SK-N-SH (cell line): ENCODE measurements at regions of chr11 and their contacts with region 1.

Region 1: DNA sequence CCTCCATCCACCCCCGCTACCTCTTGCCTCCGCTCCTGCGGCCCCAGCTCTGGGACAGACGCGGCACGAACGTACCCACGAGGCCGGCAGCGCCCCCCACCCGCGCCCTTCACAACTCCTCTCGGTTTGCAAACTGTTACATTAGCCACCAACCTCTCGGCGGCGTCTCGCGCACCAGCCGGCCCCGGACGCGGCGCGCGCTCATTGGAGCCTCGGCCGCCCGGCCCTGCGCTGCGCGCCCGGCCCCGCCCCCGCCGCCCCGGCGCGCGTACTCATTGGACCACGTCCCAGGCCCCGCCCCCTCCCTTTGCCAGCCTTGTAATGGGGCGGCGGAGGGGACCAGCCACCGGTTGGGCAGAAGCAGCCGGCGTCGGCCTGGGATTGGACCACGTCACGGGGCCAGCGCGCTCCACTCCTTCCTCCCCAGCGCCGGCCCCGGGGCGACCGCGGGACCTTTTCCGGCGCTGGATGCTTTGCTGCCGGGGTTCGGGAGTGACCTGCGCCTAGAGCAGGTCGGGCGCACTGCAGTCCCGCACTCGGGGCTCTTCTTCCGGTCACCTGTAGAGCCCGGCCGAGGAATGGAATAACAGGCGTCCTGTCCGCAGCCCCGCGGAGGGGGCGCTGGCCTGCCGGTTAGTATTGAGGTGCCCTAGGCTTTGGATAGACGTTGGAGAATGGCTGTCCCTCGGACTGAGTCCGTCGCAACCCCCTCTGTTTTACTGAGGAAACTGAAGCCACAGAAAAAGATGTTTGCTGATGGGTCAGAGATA is at the start of gene HYOU1:
- DNase-seq: peak; percentile 99
- H3K4me3 ChIP-seq: peak within 1 kb of the TSS; percentile 82 to 90
- H3K27ac ChIP-seq: peak within 1 kb of the TSS; percentile 77 to 86
- H3K4me1 ChIP-seq: peaks cover 12 to 21% of the 10 kb centered on the region in 2 experiments; a peak in 2 of 4 replicates
- H3K27me3 ChIP-seq: no peaks in the 10 kb centered on the region
- CTCF ChIP-seq: peak; percentile 27
- EP300 ChIP-seq: no peak; a peak in 1 of 4 replicates
- RAD21 ChIP-seq: no peak
- polyA plus RNA-seq, gene HYOU1: 90.8 and 105 TPM in 2 replicates

Region 2: DNA sequence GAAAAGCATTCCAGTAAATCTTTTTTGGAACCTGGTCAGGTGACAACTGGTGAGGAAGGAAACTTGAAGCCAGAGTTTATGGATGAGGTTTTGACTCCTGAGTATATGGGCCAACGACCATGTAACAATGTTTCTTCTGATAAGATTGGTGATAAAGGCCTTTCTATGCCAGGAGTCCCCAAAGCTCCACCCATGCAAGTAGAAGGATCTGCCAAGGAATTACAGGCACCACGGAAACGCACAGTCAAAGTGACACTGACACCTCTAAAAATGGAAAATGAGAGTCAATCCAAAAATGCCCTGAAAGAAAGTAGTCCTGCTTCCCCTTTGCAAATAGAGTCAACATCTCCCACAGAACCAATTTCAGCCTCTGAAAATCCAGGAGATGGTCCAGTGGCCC is 554.0 kb before region 1 on chr11:
- CTCF ChIA-PET with region 1: no interaction called
- POLR2A ChIA-PET with region 1: no interaction called
- DNase-seq: no peak
- H3K4me3 ChIP-seq: no peak overlapping the region
- H3K27ac ChIP-seq: no peak overlapping the region
- H3K4me1 ChIP-seq: no peaks in the 10 kb centered on the region
- H3K27me3 ChIP-seq: no peaks in the 10 kb centered on the region
- CTCF ChIP-seq: no peak
- EP300 ChIP-seq: no peak
- RAD21 ChIP-seq: no peak

Region 3: GRCh38 chr11:118552341-118552740 is 504.8 kb before region 1 on chr11:
- CTCF ChIA-PET with region 1: no interaction called
- POLR2A ChIA-PET with region 1: no interaction called
- DNase-seq: no peak
- H3K4me3 ChIP-seq: no peak overlapping the region
- H3K27ac ChIP-seq: no peak overlapping the region
- H3K4me1 ChIP-seq: no peaks in the 10 kb centered on the region
- H3K27me3 ChIP-seq: no peaks in the 10 kb centered on the region
- CTCF ChIP-seq: no peak
- EP300 ChIP-seq: no peak
- RAD21 ChIP-seq: no peak

Region 4: DNA sequence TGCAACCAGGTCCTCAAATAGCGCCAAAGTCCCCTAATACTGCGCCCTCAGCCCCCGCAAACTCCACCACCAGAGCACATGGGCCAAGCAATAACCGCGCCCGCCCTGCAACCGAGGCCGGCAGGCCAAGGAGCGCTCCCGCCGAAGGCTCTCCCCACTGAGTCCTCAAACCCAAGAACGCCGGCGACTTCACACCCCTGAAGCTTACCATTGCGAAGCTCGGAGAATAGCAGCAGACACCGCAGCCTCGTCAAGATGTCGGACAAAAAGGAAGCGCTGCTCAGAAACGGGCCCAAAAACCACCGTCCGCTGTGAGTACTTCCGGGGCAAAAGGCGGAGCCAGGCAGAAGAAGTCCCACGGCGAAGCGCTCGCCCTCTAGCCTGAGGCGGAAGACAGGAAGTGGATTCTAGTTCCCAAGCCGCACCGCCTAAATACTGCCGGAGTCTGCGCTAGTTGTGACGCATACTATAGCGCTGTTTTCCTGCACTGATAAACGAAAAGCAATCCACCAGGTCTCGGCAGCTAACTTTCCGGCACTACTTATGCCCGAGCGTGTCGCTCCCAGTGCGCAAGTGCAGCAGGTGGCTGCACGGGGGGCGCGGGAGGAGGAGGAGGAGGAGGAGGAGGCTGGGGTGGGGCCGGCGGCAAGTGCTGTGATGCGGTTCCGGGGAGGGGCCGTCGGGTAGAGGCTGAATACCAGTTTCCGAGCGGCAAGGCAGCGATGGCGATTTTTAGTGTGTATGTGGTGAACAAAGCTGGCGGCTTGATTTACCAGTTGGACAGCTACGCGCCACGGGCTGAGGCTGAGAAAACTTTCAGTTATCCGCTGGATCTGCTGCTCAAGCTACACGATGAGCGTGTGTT is 38.9 kb before region 1 on chr11 and contains the starts of genes RPS25 and TRAPPC4:
- CTCF ChIA-PET with region 1: interaction called, 3 read pairs
- POLR2A ChIA-PET with region 1: interaction called, 13 read pairs
- DNase-seq: peak; percentile 92
- H3K4me3 ChIP-seq: peak within 1 kb of the TSS; percentile 69 to 97
- H3K27ac ChIP-seq: peak within 1 kb of the TSS; percentile 92
- H3K4me1 ChIP-seq: peaks cover 15 to 22% of the 10 kb centered on the region in 2 experiments
- H3K27me3 ChIP-seq: no peaks in the 10 kb centered on the region
- CTCF ChIP-seq: no peak; the same call in 1 of the 2 replicates
- EP300 ChIP-seq: 0 out of 4 replicates have a peak, but pooled peaks of 1 of the 2 experiments have one; percentile 25
- RAD21 ChIP-seq: no peak
- polyA plus RNA-seq, gene RPS25: 2,335 and 2,688 TPM in 2 replicates
- polyA plus RNA-seq, gene TRAPPC4: 299 and 368 TPM in 2 replicates

Region 5: GRCh38 chr11:119044708-119045107 is 12.5 kb before region 1 on chr11:
- CTCF ChIA-PET with region 1: interaction called, 6 read pairs
- POLR2A ChIA-PET with region 1: interaction called, 12 read pairs
- DNase-seq: peak; percentile 42
- H3K4me3 ChIP-seq: no peak overlapping the region
- H3K27ac ChIP-seq: no peak overlapping the region
- H3K4me1 ChIP-seq: no peaks in the 10 kb centered on the region
- H3K27me3 ChIP-seq: no peaks in the 10 kb centered on the region
- CTCF ChIP-seq: peak; percentile 35
- EP300 ChIP-seq: no peak
- RAD21 ChIP-seq: no peak

Region 6: GRCh38 chr11:119067371-119068222 is 10.4 kb after region 1 on chr11 and contains the start of gene VPS11:
- CTCF ChIA-PET with region 1: interaction called, 7 read pairs
- POLR2A ChIA-PET with region 1: interaction called, 21 read pairs
- DNase-seq: peak; percentile 97
- H3K4me3 ChIP-seq: peak within 1 kb of the TSS; percentile 83 to 95
- H3K27ac ChIP-seq: peak within 1 kb of the TSS; percentile 76 to 77
- H3K4me1 ChIP-seq: peaks cover 5 to 6% of the 10 kb centered on the region in 2 experiments; a peak in 2 of 4 replicates
- H3K27me3 ChIP-seq: no peaks in the 10 kb centered on the region
- CTCF ChIP-seq: no peak
- EP300 ChIP-seq: 0 out of 4 replicates have a peak, but pooled peaks of 1 of the 2 experiments have one; percentile 43
- RAD21 ChIP-seq: no peak
- polyA plus RNA-seq, gene VPS11: 13.8 and 14.8 TPM in 2 replicates

Region 7: DNA sequence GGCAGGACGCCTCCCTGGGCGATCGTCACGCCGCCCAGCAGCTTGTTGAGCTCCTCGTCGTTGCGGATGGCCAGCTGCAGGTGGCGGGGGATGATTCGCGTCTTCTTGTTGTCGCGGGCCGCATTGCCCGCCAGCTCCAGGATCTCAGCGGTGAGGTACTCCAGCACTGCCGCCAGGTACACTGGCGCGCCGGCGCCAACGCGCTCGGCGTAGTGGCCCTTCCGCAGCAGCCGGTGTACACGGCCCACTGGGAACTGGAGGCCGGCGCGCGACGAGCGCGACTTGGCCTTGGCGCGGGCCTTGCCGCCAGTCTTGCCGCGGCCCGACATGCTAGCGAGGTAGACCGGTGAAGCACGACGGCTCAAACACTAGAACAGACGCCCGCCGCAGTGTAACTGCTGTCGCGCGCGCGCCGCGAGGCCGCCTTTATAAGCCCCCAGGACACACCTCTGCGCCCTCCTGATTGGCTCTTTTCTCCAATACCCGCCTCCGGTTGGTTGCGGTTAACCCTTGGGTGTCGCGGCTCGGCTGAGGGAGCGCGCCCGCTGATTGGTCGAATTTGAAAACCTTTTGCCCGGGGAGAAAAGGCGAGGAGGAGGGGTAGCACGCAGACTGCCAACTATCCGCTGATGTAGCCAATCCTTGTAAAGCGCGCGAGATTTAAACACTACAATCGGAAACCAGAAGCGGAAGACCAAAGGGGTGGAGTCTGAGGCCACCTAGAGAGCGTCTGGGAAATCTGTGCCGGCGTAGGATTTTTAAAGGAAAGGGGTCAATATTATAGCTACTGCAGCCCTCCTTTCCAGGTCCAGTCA is 38.1 kb after region 1 on chr11:
- CTCF ChIA-PET with region 1: interaction called, 3 read pairs
- POLR2A ChIA-PET with region 1: interaction called, 10 read pairs
- DNase-seq: peak; percentile 96
- H3K4me3 ChIP-seq: peak overlapping the region; percentile 84 to 87
- H3K27ac ChIP-seq: peak overlapping the region; percentile 72 to 89
- H3K4me1 ChIP-seq: peaks cover 22 to 24% of the 10 kb centered on the region in 2 experiments; a peak in 3 of 4 replicates
- H3K27me3 ChIP-seq: no peaks in the 10 kb centered on the region
- CTCF ChIP-seq: 0 out of 2 replicates have a peak, but pooled peaks have one; percentile 14
- EP300 ChIP-seq: peak in 1 of 2 experiments; percentile 57; a peak in 1 of 4 replicates
- RAD21 ChIP-seq: peak; percentile 31

Region 8: GRCh38 chr11:119258180-119258579 is 201.0 kb after region 1 on chr11:
- CTCF ChIA-PET with region 1: no interaction called
- POLR2A ChIA-PET with region 1: no interaction called
- DNase-seq: no peak
- H3K4me3 ChIP-seq: no peak overlapping the region
- H3K27ac ChIP-seq: no peak overlapping the region
- H3K4me1 ChIP-seq: no peaks in the 10 kb centered on the region; a peak in 2 of 4 replicates
- H3K27me3 ChIP-seq: no peaks in the 10 kb centered on the region
- CTCF ChIP-seq: no peak
- EP300 ChIP-seq: no peak
- RAD21 ChIP-seq: no peak

Region 9: GRCh38 chr11:119421941-119422808 is 365.0 kb after region 1 on chr11:
- CTCF ChIA-PET with region 1: no interaction called
- POLR2A ChIA-PET with region 1: no interaction called
- DNase-seq: peak; percentile 79
- H3K4me3 ChIP-seq: peak overlapping the region; percentile 87 to 96
- H3K27ac ChIP-seq: peak overlapping the region; percentile 70 to 89
- H3K4me1 ChIP-seq: peaks cover 22 to 63% of the 10 kb centered on the region in 2 experiments
- H3K27me3 ChIP-seq: no peaks in the 10 kb centered on the region
- CTCF ChIP-seq: no peak
- EP300 ChIP-seq: no peak
- RAD21 ChIP-seq: no peak